Left colon (tissue), 2 donors: ENCODE measurements at regions of chr16 and their contacts with region 1.

Region 1: DNA sequence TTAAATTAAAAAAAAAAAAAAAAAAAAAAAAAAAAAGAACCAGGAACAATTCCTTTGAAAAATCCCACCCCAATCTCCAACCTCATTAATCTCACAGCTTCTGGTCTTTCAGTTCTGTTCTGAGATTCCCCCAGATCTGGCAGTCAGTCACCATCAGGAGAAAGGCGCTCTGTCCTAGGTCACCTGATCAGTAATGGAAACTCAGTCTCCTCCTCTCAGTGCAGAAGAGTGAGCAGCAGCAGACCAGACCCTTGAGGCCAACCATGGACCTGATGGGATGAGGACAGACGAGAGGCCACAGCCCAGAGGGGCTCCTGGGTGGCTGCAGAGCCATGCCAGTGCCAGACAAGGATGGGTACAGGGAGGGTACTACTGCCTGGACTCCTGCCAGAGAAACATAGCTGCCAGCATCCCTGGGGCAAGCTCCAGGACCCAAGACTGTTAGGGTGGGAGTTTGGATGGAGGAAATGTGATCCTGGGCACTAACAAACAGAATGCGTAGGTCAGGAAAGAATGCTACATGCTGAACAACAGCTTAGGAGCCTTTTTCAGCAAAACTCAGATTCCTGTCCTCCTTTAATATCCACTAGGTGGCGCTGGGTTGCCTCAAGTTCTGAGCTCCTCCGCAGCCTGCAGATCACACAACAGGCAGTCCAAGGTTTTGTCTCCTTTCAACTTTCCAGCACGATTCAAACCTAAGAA is 28.7 kb downstream of the MPG start:
- DNase-seq: peak in 1 of 2 donors; percentile 50
- ATAC-seq: peak; percentile 83

Region 2: GRCh38 chr16:180938-181667 is 74.3 kb after region 1 on chr16:
- intact Hi-C with region 1: loop called in 1 of 2 experiments (anchors 5 kb)
- DNase-seq: peak; percentile 48 to 82
- ATAC-seq: peak; percentile 80

Region 3: GRCh38 chr16:391885-392335 is 285.1 kb after region 1 on chr16:
- intact Hi-C with region 1: no loop called
- DNase-seq: peak in 1 of 2 donors; percentile 28
- ATAC-seq: peak; percentile 75